PC-3 (cell line): ENCODE measurements at regions of chr1 and their contacts with region 1.

Region 1: DNA sequence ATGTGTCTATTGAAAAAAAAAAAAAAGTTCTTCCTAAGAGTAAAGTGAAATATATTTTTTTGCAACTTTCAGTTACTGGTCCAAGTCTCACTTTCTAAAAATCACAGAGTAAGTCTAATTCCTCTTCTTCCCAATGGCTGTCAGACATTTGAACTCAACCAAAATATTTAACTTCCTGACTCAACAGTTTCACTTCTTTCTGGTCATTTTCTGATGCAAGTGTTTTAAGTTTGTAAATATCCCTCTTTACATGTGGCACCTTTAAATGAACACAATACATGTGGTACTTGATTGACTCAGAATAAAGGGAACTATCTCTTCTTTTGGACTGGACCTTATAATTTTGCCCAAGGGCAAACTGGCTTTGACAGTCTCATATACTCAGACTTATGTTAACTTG is 76.7 kb downstream of the ASH1L start:
- DNase-seq: no peak
- ATAC-seq: no peak
- H3K4me3 ChIP-seq: no peak overlapping the region
- H3K27ac ChIP-seq: no peak overlapping the region
- H3K4me1 ChIP-seq: no peaks in the 10 kb centered on the region
- H3K27me3 ChIP-seq: no peaks in the 10 kb centered on the region
- CTCF ChIP-seq: no peak

Region 2: GRCh38 chr1:154831462-154831861 is 654.5 kb before region 1 on chr1:
- CTCF ChIA-PET with region 1: no interaction called
- POLR2A ChIA-PET with region 1: no interaction called
- intact Hi-C with region 1: no loop called
- DNase-seq: no peak
- ATAC-seq: no peak
- H3K4me3 ChIP-seq: no peak overlapping the region
- H3K27ac ChIP-seq: no peak overlapping the region
- H3K4me1 ChIP-seq: no peaks in the 10 kb centered on the region
- H3K27me3 ChIP-seq: peaks cover 95% of the 10 kb centered on the region
- CTCF ChIP-seq: no peak

Region 3: GRCh38 chr1:155339515-155340097 is 146.3 kb before region 1 on chr1:
- CTCF ChIA-PET with region 1: no interaction called
- POLR2A ChIA-PET with region 1: no interaction called
- intact Hi-C with region 1: no loop called
- DNase-seq: no peak
- ATAC-seq: no peak
- H3K4me3 ChIP-seq: no peak overlapping the region
- H3K27ac ChIP-seq: no peak overlapping the region
- H3K4me1 ChIP-seq: no peaks in the 10 kb centered on the region
- H3K27me3 ChIP-seq: no peaks in the 10 kb centered on the region
- CTCF ChIP-seq: no peak

Region 4: GRCh38 chr1:155504207-155504606 is 18.3 kb after region 1 on chr1:
- CTCF ChIA-PET with region 1: interaction called, 13 read pairs
- POLR2A ChIA-PET with region 1: no interaction called
- intact Hi-C with region 1: no loop called
- DNase-seq: peak; percentile 63
- ATAC-seq: peak; percentile 72
- H3K4me3 ChIP-seq: no peak overlapping the region
- H3K27ac ChIP-seq: no peak overlapping the region
- H3K4me1 ChIP-seq: no peaks in the 10 kb centered on the region
- H3K27me3 ChIP-seq: no peaks in the 10 kb centered on the region
- CTCF ChIP-seq: peak; percentile 68